ENCODE measurements at regions of chr3 and their contacts with region 1.

Region 1: GRCh38 chr3:53254509-53255422 is 1.1 kb downstream of the TKT start:
- H3K4me3 Mint-ChIP-seq: peak overlapping the region; percentile 91
- H3K27ac Mint-ChIP-seq: peak overlapping the region; percentile 90
- H3K4me1 Mint-ChIP-seq: peaks cover 74% of the 10 kb centered on the region
- H3K27me3 Mint-ChIP-seq: no peaks in the 10 kb centered on the region

Region 2: DNA sequence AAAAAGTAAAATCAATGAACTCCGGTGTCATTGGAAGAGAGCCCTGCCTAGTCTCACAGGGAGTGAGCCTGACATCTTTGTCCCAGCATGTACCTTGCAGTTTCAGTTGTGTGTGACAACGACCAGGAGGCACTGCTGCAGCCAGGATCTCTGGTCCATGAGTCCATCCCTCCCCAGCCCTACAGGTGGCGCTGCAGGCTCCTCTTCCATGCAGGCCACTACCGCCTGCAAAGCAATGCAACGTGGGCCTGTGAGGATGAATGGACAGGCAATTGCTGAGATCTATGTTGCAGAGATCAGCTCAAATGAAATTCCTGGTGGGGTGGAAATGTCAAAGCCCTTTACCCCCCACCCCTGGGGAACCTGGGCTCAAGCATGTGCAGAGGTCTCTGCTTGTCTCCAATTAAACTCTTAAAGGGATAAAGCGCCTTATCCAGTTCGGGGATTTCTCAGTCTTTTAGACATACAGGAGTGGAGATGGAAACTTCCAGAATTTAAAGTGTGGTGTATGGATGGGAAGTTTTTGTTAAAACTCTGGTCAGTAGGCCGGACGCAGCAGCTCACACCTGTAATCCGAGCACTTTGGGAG is 34.8 kb before region 1 on chr3:
- intact Hi-C with region 1: loop called (anchors 5 kb)
- H3K4me3 Mint-ChIP-seq: no peak overlapping the region
- H3K27ac Mint-ChIP-seq: peak overlapping the region; percentile 37
- H3K4me1 Mint-ChIP-seq: peaks cover 32% of the 10 kb centered on the region
- H3K27me3 Mint-ChIP-seq: no peaks in the 10 kb centered on the region